Heart right ventricle (tissue), 16 donors: ENCODE measurements at regions of chr17 and their contacts with region 1.

Region 1: DNA sequence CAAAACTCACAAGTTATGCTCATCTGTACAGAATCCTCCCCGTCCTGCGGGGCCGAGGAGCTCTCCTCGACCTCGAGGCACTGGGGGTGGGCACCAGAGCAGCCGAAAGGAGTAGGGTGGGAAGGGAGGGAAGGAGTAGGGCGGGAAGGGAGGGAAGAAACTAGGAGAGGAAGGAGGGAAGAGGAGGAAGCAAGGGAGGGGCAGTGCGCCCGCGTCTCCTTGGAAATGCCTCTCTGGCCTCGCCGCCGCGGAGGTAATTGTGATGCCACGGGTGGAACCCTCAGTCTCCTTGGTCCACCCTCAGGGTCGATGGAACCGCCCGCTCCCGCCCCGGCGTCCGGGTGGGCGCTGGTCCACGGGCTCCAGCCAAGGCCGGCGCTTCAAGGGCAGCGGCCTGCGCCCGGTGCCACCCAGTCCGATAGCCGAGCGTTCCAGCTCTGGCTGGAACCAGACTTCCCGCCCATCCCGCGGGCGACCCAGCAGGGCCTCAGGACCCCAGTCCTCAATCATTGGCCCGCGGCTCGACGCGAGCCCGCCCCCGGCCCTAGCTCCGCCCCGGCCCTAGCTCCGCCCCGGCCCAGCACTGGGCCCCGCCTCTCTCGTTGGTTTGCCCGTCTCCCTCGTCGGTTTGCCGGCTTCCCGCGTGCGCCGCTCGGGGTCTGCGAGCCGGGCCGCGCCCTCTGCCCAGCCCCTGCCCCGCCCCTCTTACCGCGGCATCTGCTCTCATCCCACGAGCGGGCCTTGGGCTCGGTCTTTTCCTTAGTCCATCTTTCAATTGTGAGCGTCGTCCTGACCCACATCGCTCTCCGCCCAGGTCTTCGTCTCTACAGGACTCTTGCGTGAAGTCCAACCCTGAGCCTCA is 596 bp downstream of the PROCA1 start:
- DNase-seq: peak; percentile 86 to 92
- ATAC-seq: peak; percentile 93 to 96 (median 94)
- H3K4me3 ChIP-seq: peak overlapping the region; percentile 45 to 88 (median 66)
- H3K27ac ChIP-seq: peak overlapping the region; percentile 68 to 95 (median 90)
- H3K4me1 ChIP-seq: peaks cover 0 to 28% (median 18%) of the 10 kb centered on the region in 9 donors
- H3K27me3 ChIP-seq: no peaks in the 10 kb centered on the region
- CTCF ChIP-seq: no peak

Region 2: DNA sequence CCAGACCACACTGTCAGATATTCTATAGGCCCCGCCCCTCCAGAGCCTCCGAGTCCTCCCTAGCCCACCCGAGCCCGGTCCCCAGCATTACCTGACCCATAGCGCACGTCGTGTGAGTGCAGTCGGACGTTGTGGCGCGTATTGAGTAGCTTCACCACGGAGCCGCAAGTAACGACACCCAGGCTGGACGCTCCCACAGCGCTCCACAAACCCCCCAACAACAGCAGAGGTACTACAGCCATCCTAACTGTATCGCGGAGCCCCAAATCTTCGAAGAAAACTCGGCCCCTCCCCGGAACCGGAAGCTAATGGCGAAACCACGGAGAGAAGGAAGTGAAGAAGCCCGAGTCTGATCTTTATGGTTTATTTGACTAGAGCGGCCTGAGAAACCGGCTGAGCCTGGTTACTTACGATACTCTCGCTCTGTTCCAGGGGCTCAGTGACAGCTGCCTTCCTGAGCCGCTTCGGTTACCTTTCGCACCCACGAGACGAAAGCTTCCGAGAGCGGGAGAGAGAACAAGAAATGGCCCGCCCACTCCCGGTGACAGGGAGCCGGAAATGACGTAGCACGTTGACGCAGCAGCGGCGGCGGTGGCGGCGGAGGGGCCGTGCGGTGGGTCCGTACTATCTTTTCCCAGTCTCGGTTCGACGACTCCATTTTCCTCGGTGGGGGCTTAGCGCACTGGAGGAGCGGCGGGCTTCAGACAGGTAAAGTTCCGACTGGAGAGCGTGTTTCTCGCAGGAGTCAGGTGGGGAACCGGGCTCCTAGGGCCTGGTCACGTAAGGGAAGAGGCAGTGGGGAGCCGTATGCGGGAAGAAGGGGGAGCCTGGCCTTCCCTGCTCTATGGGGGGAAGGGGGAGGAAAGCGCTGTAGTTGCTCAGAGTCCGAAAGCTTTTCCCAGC is 49.2 kb before region 1 on chr17 and contains the starts of genes SDF2 and SUPT6H:
- intact Hi-C with region 1: loop called in 4 of 10 experiments (anchors 1 to 5 kb)
- DNase-seq: peak; percentile 89 to 95
- ATAC-seq: peak; percentile 93 to 98 (median 97)
- H3K4me3 ChIP-seq: peak within 1 kb of the TSS; percentile 60 to 89 (median 78)
- H3K27ac ChIP-seq: peak within 1 kb of the TSS; percentile 84 to 99 (median 96)
- H3K4me1 ChIP-seq: peaks cover 10 to 51% (median 39%) of the 10 kb centered on the region in 9 donors
- H3K27me3 ChIP-seq: no peaks in the 10 kb centered on the region
- CTCF ChIP-seq: no peak
- total RNA-seq, gene SDF2: 26.6 to 38.8 (median 29.9) TPM
- total RNA-seq, gene SUPT6H: 44.1 to 54.1 (median 50.5) TPM

Region 3: GRCh38 chr17:28667870-28668269 is 43.2 kb before region 1 on chr17:
- intact Hi-C with region 1: loop called in 3 of 10 experiments (anchors 5 kb)
- DNase-seq: no peak
- ATAC-seq: no peak
- H3K4me3 ChIP-seq: no peak overlapping the region
- H3K27ac ChIP-seq: no peak overlapping the region
- H3K4me1 ChIP-seq: peaks cover 6 to 41% (median 31%) of the 10 kb centered on the region in 9 donors
- H3K27me3 ChIP-seq: no peaks in the 10 kb centered on the region
- CTCF ChIP-seq: no peak

Region 4: DNA sequence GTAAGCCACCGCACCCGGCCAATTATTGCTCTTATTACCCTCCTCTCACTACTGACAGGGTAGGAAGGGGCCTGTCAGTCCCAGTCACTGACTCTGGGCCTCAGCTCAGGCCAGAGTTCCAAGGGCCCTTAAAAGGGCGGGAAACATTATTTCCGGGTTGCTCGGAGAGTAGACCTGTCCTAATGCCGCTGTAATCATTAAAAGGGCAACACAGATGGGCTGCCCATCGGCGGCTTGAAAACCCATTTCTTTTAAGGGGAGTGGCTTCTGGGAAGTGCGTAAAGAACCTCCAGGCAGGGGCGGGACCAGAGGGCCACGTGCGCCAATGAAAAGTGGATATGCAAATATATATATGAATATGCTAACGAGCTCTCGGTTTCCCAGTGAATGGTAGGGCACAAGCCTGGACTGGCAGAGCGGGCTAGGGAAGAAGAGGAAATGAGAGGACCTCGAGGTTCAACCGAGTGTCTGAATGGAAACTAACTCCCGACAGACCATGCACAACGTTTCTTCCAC is 358.5 kb after region 1 on chr17:
- intact Hi-C with region 1: no loop called
- DNase-seq: no peak
- ATAC-seq: peak; percentile 21 to 57 (median 41)
- H3K4me3 ChIP-seq: no peak overlapping the region
- H3K27ac ChIP-seq: no peak overlapping the region
- H3K4me1 ChIP-seq: peaks cover 0 to 36% (median 14%) of the 10 kb centered on the region in 9 donors
- H3K27me3 ChIP-seq: no peaks in the 10 kb centered on the region
- CTCF ChIP-seq: no peak